ENCODE measurements at regions of chr5 and their contacts with region 1.

Region 1: DNA sequence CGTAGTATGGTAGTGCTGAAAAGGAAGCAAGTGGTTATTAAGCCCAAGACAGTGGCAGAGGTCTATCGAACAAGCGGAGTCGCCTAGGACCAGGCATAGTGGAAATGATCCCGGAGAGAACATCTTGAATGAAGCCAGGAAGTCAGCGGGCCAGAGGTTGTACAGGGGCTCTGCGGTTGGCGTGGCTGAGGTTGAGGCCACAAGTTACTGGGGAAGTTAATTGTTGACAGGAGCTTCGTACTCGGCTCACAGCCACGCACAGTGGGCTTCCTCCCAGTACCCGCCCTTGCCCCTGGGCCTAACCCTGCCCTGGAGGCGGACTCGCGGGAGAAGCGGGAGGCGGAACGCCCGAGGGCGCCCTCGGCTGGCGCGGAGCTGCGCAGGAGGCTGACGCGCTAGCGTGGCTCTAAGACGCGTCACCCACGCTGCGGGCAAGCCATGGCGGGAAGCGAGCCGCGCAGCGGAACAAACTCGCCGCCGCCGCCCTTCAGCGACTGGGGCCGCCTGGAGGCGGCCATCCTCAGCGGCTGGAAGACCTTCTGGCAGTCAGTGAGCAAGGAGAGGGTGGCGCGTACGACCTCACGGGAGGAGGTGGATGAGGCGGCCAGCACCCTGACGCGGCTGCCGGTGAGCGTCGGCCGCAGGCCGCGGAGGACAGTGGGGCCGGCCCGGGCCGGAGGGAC is at the start of gene FBXO4:
- DNase-seq: peak; percentile 95
- ATAC-seq: peak; percentile 93
- H3K4me3 ChIP-seq: peak within 1 kb of the TSS; percentile 72 to 87 (median 77)
- H3K4me3 Mint-ChIP-seq: peak within 1 kb of the TSS; percentile 86
- H3K27ac ChIP-seq: peak within 1 kb of the TSS; percentile 96 to 98
- H3K27ac Mint-ChIP-seq: peak within 1 kb of the TSS; percentile 95
- H3K4me1 ChIP-seq: peaks cover 13 to 17% of the 10 kb centered on the region in 2 donors
- H3K4me1 Mint-ChIP-seq: peaks cover 27% of the 10 kb centered on the region
- H3K27me3 ChIP-seq: no peaks in the 10 kb centered on the region
- H3K27me3 Mint-ChIP-seq: no peaks in the 10 kb centered on the region
- CTCF ChIP-seq: peak; percentile 67
- total RNA-seq, gene FBXO4: 17.1 and 17.9 TPM in 2 replicates

Region 2: DNA sequence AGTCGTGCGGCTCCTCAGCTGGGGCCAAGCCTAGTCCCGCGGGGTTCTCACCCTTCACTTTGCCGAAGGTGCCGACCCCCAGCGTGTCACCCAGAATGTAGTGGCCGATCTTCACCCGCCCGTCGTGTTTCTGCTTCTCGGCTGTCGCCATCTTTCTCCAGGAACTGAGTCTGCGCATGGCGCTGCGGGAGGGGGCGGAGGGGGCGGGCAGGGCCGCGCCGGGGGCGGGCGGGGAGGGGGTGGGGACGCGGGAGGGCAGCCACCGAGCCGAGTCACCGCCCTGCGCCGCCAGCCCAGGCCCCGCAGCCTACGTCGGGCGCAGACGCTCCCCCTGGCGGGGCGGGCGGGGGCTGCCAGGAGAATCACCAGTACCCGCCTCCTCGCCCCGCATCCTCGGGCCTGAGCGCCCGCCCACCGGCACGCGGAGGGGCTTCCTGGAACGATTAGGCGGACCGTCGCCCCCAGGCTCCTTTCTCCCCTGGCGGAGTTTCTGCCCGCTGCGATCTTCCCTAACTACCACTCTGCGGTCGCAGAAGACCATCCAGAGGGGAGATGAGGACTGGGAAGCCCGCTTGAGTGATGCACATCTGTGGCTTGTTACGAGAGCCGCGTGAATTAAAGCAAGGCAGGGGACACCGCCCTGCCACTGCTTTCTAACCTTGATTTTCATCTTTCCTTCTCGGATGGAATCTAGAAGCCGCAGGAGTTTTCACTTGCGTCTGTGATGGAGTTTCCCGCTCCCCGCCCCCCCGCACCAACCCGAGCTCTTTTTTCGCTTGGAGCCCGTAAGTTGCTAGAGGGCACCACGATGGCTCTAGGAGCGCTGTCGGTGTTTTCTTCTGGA is 1126.8 kb before region 1 on chr5 and contains the start of gene PRKAA1:
- CTCF ChIA-PET with region 1: no interaction called
- POLR2A ChIA-PET with region 1: no interaction called
- intact Hi-C with region 1: loop called (anchors 1 kb)
- DNase-seq: peak; percentile 93
- ATAC-seq: peak; percentile 95
- H3K4me3 ChIP-seq: peak within 1 kb of the TSS; percentile 68 to 98 (median 82)
- H3K4me3 Mint-ChIP-seq: peak within 1 kb of the TSS; percentile 82
- H3K27ac ChIP-seq: peak within 1 kb of the TSS; percentile 87 to 94
- H3K27ac Mint-ChIP-seq: peak within 1 kb of the TSS; percentile 94
- H3K4me1 ChIP-seq: peaks cover 15 to 23% of the 10 kb centered on the region in 2 donors
- H3K4me1 Mint-ChIP-seq: peaks cover 39% of the 10 kb centered on the region
- H3K27me3 ChIP-seq: no peaks in the 10 kb centered on the region
- H3K27me3 Mint-ChIP-seq: no peaks in the 10 kb centered on the region
- CTCF ChIP-seq: peak; percentile 81
- total RNA-seq, gene PRKAA1: 103 and 107 TPM in 2 replicates

Region 3: DNA sequence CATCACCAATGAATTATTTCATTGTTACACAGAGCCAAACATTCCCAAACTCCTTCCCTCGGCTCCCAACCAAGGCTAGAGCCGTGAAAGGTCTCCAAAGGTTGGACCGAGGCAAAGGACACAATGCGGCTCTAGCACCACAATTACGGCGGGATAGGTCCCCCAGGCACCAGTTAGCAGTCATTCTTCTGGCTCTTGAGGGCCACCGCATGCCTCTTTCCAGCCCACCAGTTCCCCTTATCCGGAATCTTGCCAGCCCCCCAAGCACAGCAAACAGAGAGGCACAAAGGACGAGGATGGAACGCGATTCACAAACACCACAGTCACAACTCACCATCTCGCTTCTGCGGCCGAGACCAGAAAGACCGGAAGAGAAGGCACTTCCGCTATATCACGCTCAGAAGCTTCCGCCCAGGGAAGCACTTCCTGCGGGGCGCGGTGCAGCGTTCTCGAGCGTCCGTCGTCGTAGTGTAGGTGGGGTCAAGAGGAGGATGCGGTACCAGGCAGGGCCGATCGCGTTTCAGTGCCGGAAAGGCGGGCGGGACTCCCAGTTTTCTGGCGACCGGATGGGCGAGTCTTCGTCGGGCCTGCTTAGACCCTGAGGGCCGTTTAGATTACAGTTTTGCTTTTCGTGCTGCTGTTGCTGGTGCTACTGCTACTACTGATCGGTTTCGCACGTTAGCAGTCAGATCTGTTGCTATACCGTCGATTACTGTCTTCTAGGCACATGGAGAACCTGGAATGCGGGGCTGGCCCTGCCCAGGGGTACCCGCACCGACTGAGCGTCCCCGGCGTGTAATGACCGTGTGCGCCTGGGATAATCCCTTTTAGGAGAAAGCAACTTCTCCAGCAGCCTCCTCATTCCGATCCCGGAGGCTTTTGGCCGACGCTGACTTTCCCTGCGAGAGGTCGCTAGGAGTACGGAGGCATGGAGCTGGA is 1089.9 kb before region 1 on chr5 and contains the start of gene RPL37:
- CTCF ChIA-PET with region 1: no interaction called
- POLR2A ChIA-PET with region 1: no interaction called
- intact Hi-C with region 1: loop called (anchors 5 kb)
- DNase-seq: peak; percentile 95
- ATAC-seq: peak; percentile 98
- H3K4me3 ChIP-seq: peak within 1 kb of the TSS; percentile 74 to 99 (median 89)
- H3K4me3 Mint-ChIP-seq: peak within 1 kb of the TSS; percentile 99
- H3K27ac ChIP-seq: peak within 1 kb of the TSS; percentile 85 to 91
- H3K27ac Mint-ChIP-seq: peak within 1 kb of the TSS; percentile 98
- H3K4me1 ChIP-seq: peaks cover 21 to 23% of the 10 kb centered on the region in 2 donors
- H3K4me1 Mint-ChIP-seq: peaks cover 43% of the 10 kb centered on the region
- H3K27me3 ChIP-seq: no peaks in the 10 kb centered on the region
- H3K27me3 Mint-ChIP-seq: no peaks in the 10 kb centered on the region
- CTCF ChIP-seq: no peak
- total RNA-seq, gene RPL37: 1,932 and 2,240 TPM in 2 replicates

Region 4: GRCh38 chr5:41869739-41870626 is 55.0 kb before region 1 on chr5 and contains the start of gene OXCT1:
- CTCF ChIA-PET with region 1: interaction called, 3 read pairs
- POLR2A ChIA-PET with region 1: interaction called, 8 read pairs
- intact Hi-C with region 1: loop called (anchors 1 kb)
- DNase-seq: peak; percentile 95
- ATAC-seq: peak; percentile 95
- H3K4me3 ChIP-seq: peak within 1 kb of the TSS; percentile 74 to 97 (median 89)
- H3K4me3 Mint-ChIP-seq: peak within 1 kb of the TSS; percentile 94
- H3K27ac ChIP-seq: peak within 1 kb of the TSS; percentile 79 to 85
- H3K27ac Mint-ChIP-seq: peak within 1 kb of the TSS; percentile 95
- H3K4me1 ChIP-seq: peaks cover 16 to 20% of the 10 kb centered on the region in 2 donors
- H3K4me1 Mint-ChIP-seq: peaks cover 38% of the 10 kb centered on the region
- H3K27me3 ChIP-seq: no peaks in the 10 kb centered on the region
- H3K27me3 Mint-ChIP-seq: no peaks in the 10 kb centered on the region
- CTCF ChIP-seq: no peak
- total RNA-seq, gene OXCT1: 34.9 and 35.6 TPM in 2 replicates

Region 5: DNA sequence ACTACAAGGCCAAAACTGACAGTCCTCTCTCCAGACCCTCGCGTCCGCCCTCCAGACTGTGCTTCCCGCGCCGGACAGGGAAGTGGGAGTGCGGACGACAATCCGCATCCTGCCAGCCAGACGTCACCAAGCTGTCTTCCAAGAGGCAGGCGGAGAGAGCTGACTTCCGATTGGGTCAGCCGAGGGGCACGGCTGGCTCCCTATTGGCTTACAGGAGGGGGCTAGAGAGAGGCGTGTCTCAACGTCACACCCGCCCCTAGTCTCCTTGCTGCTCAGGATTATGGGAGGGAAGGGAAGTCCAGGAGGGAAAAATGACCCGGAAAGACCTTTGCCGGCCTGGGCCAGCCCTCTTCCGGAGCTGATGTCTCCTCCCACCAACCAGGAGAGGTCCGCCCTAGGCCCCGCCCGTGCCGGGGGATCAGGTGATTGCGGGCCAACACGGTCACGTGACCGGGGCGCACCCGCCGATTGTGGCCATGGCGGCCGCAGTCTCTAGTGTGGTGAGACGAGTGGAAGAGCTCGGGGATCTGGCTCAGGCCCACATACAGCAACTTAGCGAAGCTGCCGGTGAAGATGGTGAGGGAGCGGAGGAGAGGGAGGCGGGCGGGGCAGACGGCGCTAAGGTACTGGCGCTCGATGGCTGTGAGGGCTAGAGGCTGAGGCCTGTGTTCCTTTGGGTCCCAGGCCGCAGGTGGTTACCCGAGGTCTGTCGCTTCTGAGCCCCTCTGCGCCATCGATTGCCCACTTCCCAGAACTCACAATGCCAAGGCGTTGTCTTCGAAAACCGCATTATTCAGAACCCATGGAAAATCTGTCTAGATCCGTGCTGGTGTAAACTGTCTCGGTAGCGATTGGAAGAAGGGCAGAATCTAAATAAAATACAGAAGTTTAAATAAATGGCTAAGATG is 20.9 kb before region 1 on chr5 and contains the start of gene RIMOC1:
- CTCF ChIA-PET with region 1: interaction called, 10 read pairs
- POLR2A ChIA-PET with region 1: interaction called, 15 read pairs
- intact Hi-C with region 1: loop called (anchors 1 kb)
- DNase-seq: peak; percentile 98
- ATAC-seq: peak; percentile 89
- H3K4me3 ChIP-seq: peak within 1 kb of the TSS; percentile 34 to 90 (median 80)
- H3K4me3 Mint-ChIP-seq: peak within 1 kb of the TSS; percentile 96
- H3K27ac ChIP-seq: peak within 1 kb of the TSS; percentile 89 to 98
- H3K27ac Mint-ChIP-seq: peak within 1 kb of the TSS; percentile 98
- H3K4me1 ChIP-seq: peaks cover 15 to 17% of the 10 kb centered on the region in 2 donors
- H3K4me1 Mint-ChIP-seq: peaks cover 34% of the 10 kb centered on the region
- H3K27me3 ChIP-seq: peaks cover 0 to 3% (median 1%) of the 10 kb centered on the region in 4 experiments
- H3K27me3 Mint-ChIP-seq: peaks cover 8% of the 10 kb centered on the region
- CTCF ChIP-seq: no peak
- total RNA-seq, gene RIMOC1: 32.1 and 33.1 TPM in 2 replicates

Region 6: GRCh38 chr5:41940641-41941040 is 15.6 kb after region 1 on chr5:
- CTCF ChIA-PET with region 1: no interaction called
- POLR2A ChIA-PET with region 1: interaction called, 10 read pairs
- intact Hi-C with region 1: no loop called
- DNase-seq: no peak
- ATAC-seq: no peak
- H3K4me3 ChIP-seq: no peak overlapping the region
- H3K4me3 Mint-ChIP-seq: no peak overlapping the region
- H3K27ac ChIP-seq: no peak overlapping the region
- H3K27ac Mint-ChIP-seq: no peak overlapping the region
- H3K4me1 ChIP-seq: no peaks in the 10 kb centered on the region
- H3K4me1 Mint-ChIP-seq: no peaks in the 10 kb centered on the region
- H3K27me3 ChIP-seq: no peaks in the 10 kb centered on the region
- H3K27me3 Mint-ChIP-seq: no peaks in the 10 kb centered on the region
- CTCF ChIP-seq: no peak

Region 7: GRCh38 chr5:42001673-42002072 is 76.7 kb after region 1 on chr5:
- CTCF ChIA-PET with region 1: no interaction called
- POLR2A ChIA-PET with region 1: no interaction called
- intact Hi-C with region 1: no loop called
- DNase-seq: no peak
- ATAC-seq: no peak
- H3K4me3 ChIP-seq: no peak overlapping the region
- H3K4me3 Mint-ChIP-seq: no peak overlapping the region
- H3K27ac ChIP-seq: no peak overlapping the region
- H3K27ac Mint-ChIP-seq: no peak overlapping the region
- H3K4me1 ChIP-seq: no peaks in the 10 kb centered on the region
- H3K4me1 Mint-ChIP-seq: no peaks in the 10 kb centered on the region
- H3K27me3 ChIP-seq: no peaks in the 10 kb centered on the region
- H3K27me3 Mint-ChIP-seq: peaks cover 3% of the 10 kb centered on the region
- CTCF ChIP-seq: no peak

Region 8: DNA sequence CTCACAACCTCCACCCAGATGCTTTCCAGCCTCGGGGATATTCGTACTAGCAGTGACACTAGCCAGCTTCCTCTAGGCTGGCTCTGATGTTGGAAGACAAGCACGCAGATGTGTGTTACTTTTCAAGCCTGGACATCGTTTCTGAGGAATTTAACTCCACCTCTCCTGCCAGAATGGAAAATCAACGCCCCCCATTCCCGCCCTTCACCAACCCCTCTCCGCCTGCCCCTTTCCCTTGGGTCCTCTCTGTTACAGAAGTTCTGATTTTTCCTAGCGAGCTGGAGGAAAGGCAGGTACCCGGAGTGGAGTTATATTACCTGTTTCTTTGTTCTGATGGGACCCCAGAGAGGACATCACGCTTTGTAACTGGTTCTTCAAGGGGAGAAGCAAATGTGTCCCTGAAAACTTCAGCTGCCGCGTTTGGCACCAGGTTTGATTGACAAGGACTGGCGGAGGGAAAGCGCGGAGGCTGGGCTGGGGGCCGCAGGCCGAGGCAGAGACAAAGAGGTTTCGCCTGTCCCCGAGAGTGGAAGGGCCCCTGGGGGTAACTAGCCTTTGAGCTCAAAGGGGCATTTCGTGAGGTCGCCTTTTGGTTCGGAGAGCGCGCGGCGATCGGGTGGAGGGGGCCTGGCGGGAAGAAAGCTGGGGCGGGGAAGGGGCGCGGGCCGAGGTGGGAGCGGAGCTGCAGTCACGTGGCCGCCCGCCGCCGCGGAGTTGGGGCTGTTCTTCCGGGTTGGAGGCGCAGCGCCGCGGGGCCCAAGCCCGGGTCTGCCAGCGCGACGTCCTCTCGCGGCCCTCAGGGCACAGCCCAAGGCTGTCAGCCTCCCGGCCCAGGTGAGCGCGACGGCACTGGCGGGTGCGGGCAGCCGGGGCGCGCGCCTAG is 1677.7 kb after region 1 on chr5 and contains the start of gene NNT:
- CTCF ChIA-PET with region 1: no interaction called
- POLR2A ChIA-PET with region 1: no interaction called
- intact Hi-C with region 1: loop called (anchors 2 kb)
- DNase-seq: peak; percentile 83
- ATAC-seq: peak; percentile 71
- H3K4me3 ChIP-seq: peak within 1 kb of the TSS; percentile 65 to 99 (median 80)
- H3K4me3 Mint-ChIP-seq: peak within 1 kb of the TSS; percentile 95
- H3K27ac ChIP-seq: peak within 1 kb of the TSS; percentile 75 to 89
- H3K27ac Mint-ChIP-seq: peak within 1 kb of the TSS; percentile 91
- H3K4me1 ChIP-seq: peaks cover 16 to 24% of the 10 kb centered on the region in 2 donors
- H3K4me1 Mint-ChIP-seq: peaks cover 34% of the 10 kb centered on the region
- H3K27me3 ChIP-seq: no peaks in the 10 kb centered on the region
- H3K27me3 Mint-ChIP-seq: no peaks in the 10 kb centered on the region
- CTCF ChIP-seq: no peak
- total RNA-seq, gene NNT: 61.1 and 63.0 TPM in 2 replicates